ENCODE measurements at regions of chr4 and their contacts with region 1.

Region 1: GRCh38 chr4:85474818-85475630 is at the start of gene ARHGAP24:
- DNase-seq: peak; percentile 88 to 94 (median 91)
- ATAC-seq: peak; percentile 98 to 99
- H3K4me3 ChIP-seq: peak within 1 kb of the TSS; percentile 89
- H3K27ac ChIP-seq: peak within 1 kb of the TSS; percentile 85
- H3K4me1 ChIP-seq: no peaks in the 10 kb centered on the region
- H3K27me3 ChIP-seq: no peaks in the 10 kb centered on the region
- total RNA-seq, gene ARHGAP24: 36.5 to 49.3 (median 39.3) TPM

Region 2: DNA sequence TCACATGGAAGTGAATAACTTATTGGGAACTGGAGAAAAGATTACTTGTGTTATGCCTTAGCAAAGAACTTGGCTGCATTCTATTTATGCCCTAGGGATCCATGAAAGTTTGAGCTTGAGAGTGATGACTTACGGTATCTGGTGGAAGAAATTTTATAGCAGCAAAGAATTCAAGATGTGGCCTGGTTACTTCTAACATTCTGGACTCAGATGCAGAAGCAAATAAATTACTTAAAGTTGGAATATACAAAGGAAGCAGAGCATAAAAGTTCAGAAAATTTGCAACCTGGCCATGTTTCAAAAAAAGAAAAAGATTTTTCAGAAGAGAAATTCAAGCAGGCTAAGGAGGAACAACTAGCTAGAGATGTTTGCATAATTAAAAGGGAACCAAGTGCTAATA is 256.3 kb before region 1 on chr4:
- intact Hi-C with region 1: no loop called
- DNase-seq: no peak
- ATAC-seq: no peak
- H3K4me3 ChIP-seq: no peak overlapping the region
- H3K27ac ChIP-seq: no peak overlapping the region
- H3K4me1 ChIP-seq: no peaks in the 10 kb centered on the region
- H3K27me3 ChIP-seq: no peaks in the 10 kb centered on the region

Region 3: GRCh38 chr4:85686398-85686797 is 211.4 kb after region 1 on chr4:
- intact Hi-C with region 1: no loop called
- DNase-seq: no peak
- ATAC-seq: no peak
- H3K4me3 ChIP-seq: no peak overlapping the region
- H3K27ac ChIP-seq: no peak overlapping the region
- H3K4me1 ChIP-seq: no peaks in the 10 kb centered on the region
- H3K27me3 ChIP-seq: no peaks in the 10 kb centered on the region

Region 4: DNA sequence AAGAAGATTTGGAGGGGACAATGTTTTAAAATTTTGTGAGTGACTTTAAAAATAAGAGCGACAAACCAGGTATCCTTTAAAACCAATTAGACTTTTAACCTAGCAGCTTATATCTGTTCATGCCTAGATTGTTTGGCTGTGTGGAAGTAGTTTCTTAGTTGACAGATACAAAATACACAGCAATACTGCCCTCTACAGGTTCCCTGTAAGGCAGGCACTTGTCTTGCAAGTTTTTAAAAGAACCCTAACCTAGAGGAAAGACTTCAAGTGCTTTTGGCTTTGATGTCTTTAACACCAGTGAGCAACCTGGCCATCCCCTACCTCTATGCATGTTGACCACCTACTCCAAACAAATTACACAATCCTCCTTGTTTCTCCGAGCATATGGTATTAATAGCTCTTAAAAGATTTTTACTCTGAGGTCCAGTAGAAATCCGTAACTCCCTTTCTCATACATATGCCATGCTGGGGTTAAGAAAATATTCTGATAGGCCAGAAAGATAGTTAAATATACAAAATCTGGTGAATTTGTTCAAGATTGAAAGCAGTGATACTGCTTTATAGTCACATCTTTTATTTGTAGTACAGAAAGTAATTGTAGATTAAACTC is 273.0 kb after region 1 on chr4:
- intact Hi-C with region 1: loop called in 2 of 4 experiments (anchors 5 to 10 kb)
- DNase-seq: no peak
- ATAC-seq: peak; percentile 77 to 78
- H3K4me3 ChIP-seq: no peak overlapping the region
- H3K27ac ChIP-seq: no peak overlapping the region
- H3K4me1 ChIP-seq: peaks cover 5% of the 10 kb centered on the region
- H3K27me3 ChIP-seq: no peaks in the 10 kb centered on the region